ENCODE measurements at regions of chr6 and their contacts with region 1.

Region 1: GRCh38 chr6:157274471-157275226 is 48.7 kb downstream of the TMEM242 start:
- DNase-seq: peak; percentile 93
- ATAC-seq: peak; percentile 79
- H3K4me3 Mint-ChIP-seq: peak overlapping the region; percentile 94
- H3K27ac Mint-ChIP-seq: peak overlapping the region; percentile 96
- H3K4me1 Mint-ChIP-seq: peaks cover 9% of the 10 kb centered on the region
- H3K27me3 Mint-ChIP-seq: no peaks in the 10 kb centered on the region
- CTCF ChIP-seq: no peak

Region 2: DNA sequence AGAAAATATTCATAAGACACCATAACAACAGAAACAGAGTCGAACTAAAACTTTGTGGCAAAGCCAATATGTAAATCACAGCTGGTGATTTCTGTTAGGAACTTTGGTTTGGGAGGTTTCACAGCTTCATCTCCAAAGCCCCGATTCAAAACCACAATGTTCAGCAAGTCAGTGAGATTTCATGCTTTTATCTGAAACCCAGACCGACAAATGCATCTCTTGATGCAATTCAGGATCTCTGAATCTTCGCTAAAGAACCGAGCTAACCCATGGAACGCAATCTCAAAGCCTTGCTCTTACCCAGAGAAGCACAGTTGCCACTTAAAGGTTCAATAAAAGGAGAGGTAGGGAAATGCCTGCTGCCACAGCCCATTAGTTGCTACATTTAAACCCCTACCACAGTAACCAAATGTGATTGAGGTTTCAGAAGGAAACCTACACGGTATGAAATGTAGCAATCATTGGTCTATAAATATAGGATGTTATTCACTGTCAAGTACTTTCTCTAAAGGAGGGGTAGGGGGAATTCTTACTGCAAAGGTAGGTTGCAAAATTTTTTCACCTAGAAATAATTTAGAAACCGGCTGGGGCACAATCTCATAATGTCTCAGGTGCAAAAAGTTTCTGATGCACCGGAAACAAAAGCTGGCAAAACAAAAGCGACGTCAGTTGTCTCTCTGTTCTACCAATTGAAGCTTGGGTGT is 878.4 kb before region 1 on chr6:
- CTCF ChIA-PET with region 1: no interaction called
- POLR2A ChIA-PET with region 1: interaction called, 3 read pairs
- intact Hi-C with region 1: loop called (anchors 10 kb)
- DNase-seq: no peak
- ATAC-seq: peak; percentile 62
- H3K4me3 Mint-ChIP-seq: peak overlapping the region; percentile 68
- H3K27ac Mint-ChIP-seq: peak overlapping the region; percentile 84
- H3K4me1 Mint-ChIP-seq: peaks cover 76% of the 10 kb centered on the region
- H3K27me3 Mint-ChIP-seq: no peaks in the 10 kb centered on the region
- CTCF ChIP-seq: no peak

Region 3: DNA sequence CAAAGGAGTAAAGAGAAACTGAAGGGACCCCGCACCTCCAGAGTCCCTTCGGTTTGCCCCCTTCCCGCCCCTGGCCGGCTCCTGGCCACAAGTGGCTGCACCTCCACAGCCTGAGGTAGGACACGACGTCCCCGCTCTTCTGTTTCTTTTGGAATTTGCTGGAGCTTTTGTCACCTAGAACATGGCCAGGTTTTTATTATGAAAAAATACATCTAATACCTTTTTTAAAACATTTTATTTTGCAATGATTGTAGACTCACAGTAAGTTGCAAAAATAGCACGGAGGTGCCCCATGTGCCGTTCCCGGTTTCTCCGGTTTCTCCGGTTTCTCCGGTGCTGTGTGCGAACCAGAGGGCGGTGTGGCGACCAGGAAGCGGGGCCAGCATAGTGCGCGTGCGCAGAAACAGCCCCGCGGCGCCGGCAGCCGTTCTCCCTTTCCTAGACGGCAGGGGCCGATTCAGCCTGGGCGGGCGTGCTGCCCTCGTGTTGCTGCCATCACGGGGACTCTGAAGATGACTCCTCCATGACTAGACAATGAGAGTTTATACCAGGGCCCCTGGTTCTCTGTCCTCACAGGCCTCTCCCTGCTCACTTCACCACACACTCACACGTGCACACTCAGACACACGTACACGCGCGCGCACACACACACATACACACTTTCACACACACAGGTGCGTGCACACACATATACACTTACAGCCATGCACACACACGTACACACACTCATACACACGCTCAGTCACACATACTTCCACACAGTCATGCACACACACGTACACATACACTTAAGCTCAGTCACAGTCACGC is 53.4 kb before region 1 on chr6:
- CTCF ChIA-PET with region 1: no interaction called
- POLR2A ChIA-PET with region 1: interaction called, 19 read pairs
- intact Hi-C with region 1: loop called (anchors 1 kb)
- DNase-seq: peak; percentile 75
- ATAC-seq: peak; percentile 61
- H3K4me3 Mint-ChIP-seq: peak overlapping the region; percentile 77
- H3K27ac Mint-ChIP-seq: peak overlapping the region; percentile 15
- H3K4me1 Mint-ChIP-seq: peaks cover 44% of the 10 kb centered on the region
- H3K27me3 Mint-ChIP-seq: no peaks in the 10 kb centered on the region
- CTCF ChIP-seq: no peak

Region 4: GRCh38 chr6:157235600-157236039 is 39.0 kb before region 1 on chr6:
- CTCF ChIA-PET with region 1: interaction called, 3 read pairs
- POLR2A ChIA-PET with region 1: interaction called, 22 read pairs
- intact Hi-C with region 1: loop called (anchors 1 kb)
- DNase-seq: peak; percentile 39
- ATAC-seq: peak; percentile 69
- H3K4me3 Mint-ChIP-seq: peak overlapping the region; percentile 90
- H3K27ac Mint-ChIP-seq: peak overlapping the region; percentile 37
- H3K4me1 Mint-ChIP-seq: peaks cover 18% of the 10 kb centered on the region
- H3K27me3 Mint-ChIP-seq: peaks cover 44% of the 10 kb centered on the region
- CTCF ChIP-seq: no peak

Region 5: GRCh38 chr6:157592525-157592924 is 317.9 kb after region 1 on chr6:
- CTCF ChIA-PET with region 1: no interaction called
- POLR2A ChIA-PET with region 1: no interaction called
- intact Hi-C with region 1: no loop called
- DNase-seq: no peak
- ATAC-seq: no peak
- H3K4me3 Mint-ChIP-seq: peak overlapping the region; percentile 19
- H3K27ac Mint-ChIP-seq: no peak overlapping the region
- H3K4me1 Mint-ChIP-seq: peaks cover 29% of the 10 kb centered on the region
- H3K27me3 Mint-ChIP-seq: no peaks in the 10 kb centered on the region
- CTCF ChIP-seq: no peak